ENCODE measurements at regions of chr20 and their contacts with region 1.

Region 1: GRCh38 chr20:23320317-23320716 is 30.3 kb upstream of the NXT1 start:
- DNase-seq: no peak
- H3K4me3 ChIP-seq: no peak overlapping the region
- H3K27ac ChIP-seq: no peak overlapping the region
- H3K4me1 ChIP-seq: no peaks in the 10 kb centered on the region
- H3K27me3 ChIP-seq: no peaks in the 10 kb centered on the region
- CTCF ChIP-seq: no peak
- EP300 ChIP-seq: no peak
- POLR2A ChIP-seq: no peak

Region 2: GRCh38 chr20:23291575-23292240 is 28.6 kb before region 1 on chr20:
- intact Hi-C with region 1: loop called in 1 of 4 experiments (anchors 1 kb)
- DNase-seq: no peak
- H3K4me3 ChIP-seq: no peak overlapping the region
- H3K27ac ChIP-seq: no peak overlapping the region
- H3K4me1 ChIP-seq: no peaks in the 10 kb centered on the region
- H3K27me3 ChIP-seq: no peaks in the 10 kb centered on the region
- CTCF ChIP-seq: no peak
- EP300 ChIP-seq: no peak
- POLR2A ChIP-seq: no peak